ENCODE measurements at regions of chr4 and their contacts with region 1.

Region 1: DNA sequence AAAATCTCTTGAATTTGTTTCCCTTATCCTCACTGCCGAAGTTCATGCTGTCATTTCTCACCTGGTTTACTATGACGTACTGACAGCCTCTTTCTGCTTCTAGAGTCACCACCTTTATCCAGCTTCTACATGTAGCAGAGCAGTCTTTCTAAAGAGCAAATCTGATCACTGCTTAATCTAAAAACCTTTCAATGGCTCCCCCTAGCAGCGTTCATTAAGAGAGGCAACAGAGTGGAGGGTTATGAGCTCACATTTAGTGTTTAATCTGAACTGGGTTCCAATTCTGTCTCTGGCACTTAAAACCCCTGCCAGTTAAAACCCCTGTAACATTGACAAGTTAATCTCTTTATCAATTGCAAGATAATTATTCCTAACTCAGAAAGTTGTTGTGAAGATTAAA is 4.4 kb downstream of the RBPJ start:
- DNase-seq: no peak
- ATAC-seq: peak; percentile 31; the same call in 1 of the 2 replicates
- H3K4me3 ChIP-seq: no peak overlapping the region
- H3K27ac ChIP-seq: no peak overlapping the region
- H3K4me1 ChIP-seq: peaks cover 11% of the 10 kb centered on the region
- H3K27me3 ChIP-seq: no peaks in the 10 kb centered on the region
- CTCF ChIP-seq: peak; percentile 58

Region 2: DNA sequence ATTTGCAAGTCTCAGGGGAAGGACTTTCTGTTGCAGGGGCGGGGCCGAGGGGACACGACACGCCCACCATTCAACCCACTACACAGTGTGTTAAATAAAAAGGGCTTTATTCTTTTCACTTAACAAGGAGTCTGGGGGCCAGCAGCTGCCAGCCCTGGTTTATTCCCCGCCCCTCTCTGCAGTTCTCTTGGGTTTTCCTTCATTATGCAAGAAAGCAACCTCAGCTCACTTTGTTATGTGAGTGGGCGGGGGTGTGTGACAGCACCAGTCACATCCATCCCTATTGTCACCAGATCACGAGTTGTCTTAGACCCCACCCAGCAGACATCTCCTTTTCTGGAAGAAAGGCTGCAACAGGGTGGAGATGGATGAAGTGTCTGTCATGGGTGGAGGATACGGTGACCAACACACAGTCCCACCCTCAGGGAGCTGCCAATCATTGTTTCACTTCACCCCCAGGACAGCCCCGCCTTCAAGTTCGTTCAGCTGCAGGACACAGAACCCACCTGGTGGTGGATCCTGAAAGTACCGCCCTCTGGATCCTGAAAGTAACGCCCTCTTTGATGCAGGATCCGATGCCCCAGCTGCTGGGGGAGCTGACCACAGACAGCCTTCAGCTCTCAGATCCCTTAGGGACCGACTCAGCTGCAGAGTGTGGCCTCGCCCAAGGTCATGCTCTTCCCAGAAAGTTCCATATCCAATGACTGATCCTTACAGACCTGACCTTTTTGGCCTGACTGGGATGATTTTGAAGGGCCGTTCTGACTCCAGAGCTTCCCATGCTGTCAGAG is 331.6 kb before region 1 on chr4:
- CTCF ChIA-PET with region 1: no interaction called
- POLR2A ChIA-PET with region 1: no interaction called
- in situ Hi-C with region 1: no loop called
- intact Hi-C with region 1: loop called (anchors 2 kb)
- DNase-seq: no peak
- ATAC-seq: no peak; the same call in 1 of the 2 replicates
- H3K4me3 ChIP-seq: no peak overlapping the region
- H3K27ac ChIP-seq: no peak overlapping the region
- H3K4me1 ChIP-seq: no peaks in the 10 kb centered on the region
- H3K27me3 ChIP-seq: no peaks in the 10 kb centered on the region
- CTCF ChIP-seq: peak; percentile 34